ENCODE measurements at regions of chr12 and their contacts with region 1.

Region 1: DNA sequence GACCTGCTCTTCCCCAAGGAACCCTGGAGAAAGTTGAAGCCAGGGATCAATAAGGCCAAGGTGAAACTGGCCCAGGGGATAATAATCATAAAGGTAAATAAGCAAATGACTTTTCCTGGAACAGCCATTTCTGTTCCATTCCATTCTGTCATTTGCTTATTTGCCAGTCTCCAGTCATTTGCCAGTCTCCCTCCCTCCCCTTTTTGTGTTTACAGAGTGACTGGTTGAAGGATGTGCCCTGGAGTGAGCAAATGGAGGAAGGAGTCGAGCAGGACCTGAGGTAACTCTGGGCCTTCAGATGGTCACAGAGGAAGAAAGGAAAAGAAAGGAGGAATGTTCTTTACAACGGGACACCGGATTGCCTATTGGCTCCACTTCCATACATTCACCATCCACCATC is 17.8 kb upstream of the DCD start:
- DNase-seq: no peak
- H3K4me3 ChIP-seq: no peak overlapping the region
- H3K27ac ChIP-seq: no peak overlapping the region
- H3K4me1 ChIP-seq: no peaks in the 10 kb centered on the region
- H3K27me3 ChIP-seq: no peaks in the 10 kb centered on the region; a peak in 1 of 7 replicates
- CTCF ChIP-seq: no peak
- EP300 ChIP-seq: no peak
- POLR2A ChIP-seq: no peak
- RAD21 ChIP-seq: no peak

Region 2: DNA sequence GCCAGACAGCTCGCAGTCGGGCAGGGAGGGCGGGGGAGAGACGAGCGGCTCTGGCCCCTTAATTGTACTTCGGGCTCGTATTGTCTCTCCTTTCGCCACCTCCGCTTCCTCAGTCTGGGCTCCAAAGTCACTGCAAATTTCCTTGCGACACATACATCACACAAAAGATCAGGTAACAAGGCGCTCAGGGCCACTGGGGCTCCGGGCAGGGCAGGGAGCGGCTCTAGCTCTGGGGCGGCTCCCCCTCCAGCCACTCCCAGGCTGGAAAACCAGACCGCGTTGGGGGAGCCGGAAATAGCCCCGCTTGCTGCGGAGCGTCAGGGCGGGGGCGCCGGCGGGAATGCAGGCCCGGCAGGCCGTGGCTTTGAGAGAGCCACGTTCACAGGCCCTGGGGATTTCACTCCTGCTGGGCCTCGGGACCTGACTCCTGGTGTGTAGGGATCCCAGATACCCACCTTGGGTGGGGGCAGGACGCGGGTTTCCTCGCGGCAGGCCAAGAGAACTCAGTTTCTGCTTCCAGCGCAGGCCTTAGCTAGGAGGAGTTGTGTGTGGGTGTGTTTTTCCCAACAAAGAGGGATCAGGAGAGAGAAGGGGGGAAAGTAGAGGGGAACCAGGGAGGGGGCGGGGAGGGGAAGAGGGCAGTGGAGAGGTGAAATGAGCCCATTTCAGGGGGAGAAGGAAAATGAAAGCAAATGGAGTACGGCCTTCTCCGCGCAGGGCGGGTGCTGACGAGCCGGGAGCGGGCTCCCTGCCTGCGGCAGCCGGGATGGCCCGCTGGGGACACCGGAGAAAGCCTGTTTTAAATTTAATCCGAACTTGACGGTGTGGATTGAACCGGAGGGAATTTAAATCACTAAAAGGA is 670.4 kb before region 1 on chr12:
- CTCF ChIA-PET with region 1: no interaction called
- POLR2A ChIA-PET with region 1: no interaction called
- DNase-seq: peak in 1 of 2 experiments; percentile 80
- H3K4me3 ChIP-seq: peak overlapping the region in 1 of 4 experiments; percentile 45; a peak in 3 of 8 replicates
- H3K27ac ChIP-seq: no peak overlapping the region
- H3K4me1 ChIP-seq: peaks cover 0 to 17% (median 8%) of the 10 kb centered on the region in 4 experiments; a peak in 5 of 7 replicates
- H3K27me3 ChIP-seq: peaks cover 97 to 100% (median 100%) of the 10 kb centered on the region in 4 experiments
- CTCF ChIP-seq: no peak
- EP300 ChIP-seq: no peak
- POLR2A ChIP-seq: no peak
- RAD21 ChIP-seq: no peak

Region 3: GRCh38 chr12:54390668-54391551 is 275.1 kb before region 1 on chr12:
- CTCF ChIA-PET with region 1: no interaction called
- POLR2A ChIA-PET with region 1: no interaction called
- DNase-seq: peak in 1 of 2 experiments; percentile 89
- H3K4me3 ChIP-seq: peak overlapping the region; percentile 57 to 96 (median 69)
- H3K27ac ChIP-seq: no peak overlapping the region
- H3K4me1 ChIP-seq: peaks cover 38 to 57% (median 47%) of the 10 kb centered on the region in 4 experiments
- H3K27me3 ChIP-seq: peaks cover 0 to 4% (median 0%) of the 10 kb centered on the region in 4 experiments; a peak in 2 of 7 replicates
- CTCF ChIP-seq: peak; percentile 30 to 33 (median 32)
- EP300 ChIP-seq: peak in 1 of 2 experiments; percentile 19; a peak in 1 of 3 replicates
- POLR2A ChIP-seq: no peak
- RAD21 ChIP-seq: no peak

Region 4: DNA sequence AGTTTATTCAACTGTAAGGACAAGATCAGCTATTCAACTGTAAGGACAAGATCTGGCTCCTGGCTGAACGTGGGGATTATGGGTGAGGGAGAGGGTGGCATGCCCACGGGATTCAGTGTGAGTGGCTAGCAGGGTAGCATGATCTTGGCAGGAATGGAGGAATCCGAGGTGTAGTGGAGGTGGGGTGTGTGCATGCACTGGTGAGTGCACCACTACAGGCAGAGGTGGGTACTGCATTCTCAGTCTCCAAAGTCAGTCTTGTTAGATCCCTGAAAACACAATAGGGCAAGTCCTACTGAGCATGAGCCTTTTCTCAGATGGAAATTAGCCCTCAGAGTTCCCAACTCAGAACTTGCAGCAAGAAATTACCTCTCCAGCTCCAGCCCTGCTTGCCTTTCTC is 14.4 kb after region 1 on chr12:
- CTCF ChIA-PET with region 1: interaction called, 88 read pairs
- POLR2A ChIA-PET with region 1: no interaction called
- DNase-seq: peak; percentile 25 to 90
- H3K4me3 ChIP-seq: no peak overlapping the region
- H3K27ac ChIP-seq: no peak overlapping the region
- H3K4me1 ChIP-seq: peaks cover 12 to 23% (median 20%) of the 10 kb centered on the region in 4 experiments
- H3K27me3 ChIP-seq: no peaks in the 10 kb centered on the region; a peak in 1 of 7 replicates
- CTCF ChIP-seq: peak; percentile 46 to 92 (median 83)
- EP300 ChIP-seq: no peak
- POLR2A ChIP-seq: no peak
- RAD21 ChIP-seq: peak; percentile 21 to 37; a peak in 3 of 4 replicates

Measured in H1 (cell line).